ENCODE measurements at regions of chr7 and their contacts with region 1.

Region 1: GRCh38 chr7:123534383-123535260 is at the start of gene IQUB:
- DNase-seq: peak; percentile 94 to 96 (median 95)
- H3K4me3 ChIP-seq: peak within 1 kb of the TSS; percentile 63 to 88 (median 74)
- H3K27ac ChIP-seq: peak within 1 kb of the TSS in 1 of 2 experiments; percentile 64
- H3K4me1 ChIP-seq: peaks cover 0 to 17% (median 13%) of the 10 kb centered on the region in 4 experiments
- H3K27me3 ChIP-seq: peaks cover 4 to 22% (median 6%) of the 10 kb centered on the region in 5 experiments

Region 2: GRCh38 chr7:123494193-123494796 is 40.3 kb before region 1 on chr7:
- CTCF ChIA-PET with region 1: interaction called, 25 read pairs
- POLR2A ChIA-PET with region 1: no interaction called
- DNase-seq: peak; percentile 40 to 71 (median 58)
- H3K4me3 ChIP-seq: no peak overlapping the region
- H3K27ac ChIP-seq: no peak overlapping the region
- H3K4me1 ChIP-seq: no peaks in the 10 kb centered on the region
- H3K27me3 ChIP-seq: peaks cover 0 to 16% (median 0%) of the 10 kb centered on the region in 5 experiments

Region 3: DNA sequence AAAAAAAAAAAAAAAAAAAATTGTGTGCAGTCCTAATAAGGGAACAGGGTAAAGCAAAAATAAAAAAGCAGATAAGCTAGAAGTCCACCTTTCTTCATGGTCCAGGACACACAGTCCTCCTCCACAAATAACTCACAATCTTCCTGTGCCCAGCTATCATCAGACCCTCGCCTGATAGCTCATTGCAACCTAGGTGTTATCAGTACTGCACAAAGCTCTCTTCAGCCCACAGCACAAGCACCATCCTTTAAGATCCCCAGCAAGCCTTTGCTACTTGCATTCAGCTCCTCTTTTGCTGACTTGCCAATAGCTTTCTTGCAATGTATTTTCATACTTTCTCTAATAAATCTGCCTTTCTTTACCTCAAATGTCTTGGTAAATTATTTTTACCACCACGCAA is 18.0 kb after region 1 on chr7:
- CTCF ChIA-PET with region 1: interaction called, 10 read pairs
- POLR2A ChIA-PET with region 1: interaction called, 3 read pairs
- DNase-seq: no peak
- H3K4me3 ChIP-seq: no peak overlapping the region
- H3K27ac ChIP-seq: no peak overlapping the region
- H3K4me1 ChIP-seq: peaks cover 5 to 18% (median 11%) of the 10 kb centered on the region in 4 experiments
- H3K27me3 ChIP-seq: no peaks in the 10 kb centered on the region